ENCODE measurements at regions of chr9 and their contacts with region 1.

Region 1: GRCh38 chr9:131237931-131238401 is 38.3 kb downstream of the FAM78A start:
- DNase-seq: peak; percentile 67 to 90 (median 83)
- H3K4me3 ChIP-seq: peak overlapping the region; percentile 52
- H3K4me3 Mint-ChIP-seq: peak overlapping the region; percentile 11 to 93 (median 82)
- H3K27ac ChIP-seq: peak overlapping the region; percentile 38
- H3K27ac Mint-ChIP-seq: peak overlapping the region; percentile 91 to 99 (median 97)
- H3K4me1 ChIP-seq: peaks cover 53% of the 10 kb centered on the region
- H3K4me1 Mint-ChIP-seq: peaks cover 41 to 63% (median 50%) of the 10 kb centered on the region in 3 donors
- H3K27me3 ChIP-seq: no peaks in the 10 kb centered on the region
- H3K27me3 Mint-ChIP-seq: peaks cover 0 to 1% of the 10 kb centered on the region in 2 donors

Region 2: GRCh38 chr9:130997925-130998596 is 239.9 kb before region 1 on chr9:
- CTCF ChIA-PET with region 1: no interaction called
- POLR2A ChIA-PET with region 1: no interaction called
- DNase-seq: peak in 1 of 5 donors; percentile 12
- H3K4me3 ChIP-seq: no peak overlapping the region
- H3K4me3 Mint-ChIP-seq: peak overlapping the region in 1 of 7 donors; percentile 68
- H3K27ac ChIP-seq: no peak overlapping the region
- H3K27ac Mint-ChIP-seq: no peak overlapping the region
- H3K4me1 ChIP-seq: no peaks in the 10 kb centered on the region
- H3K4me1 Mint-ChIP-seq: peaks cover 0 to 4% (median 3%) of the 10 kb centered on the region in 3 donors
- H3K27me3 ChIP-seq: peaks cover 37% of the 10 kb centered on the region
- H3K27me3 Mint-ChIP-seq: peaks cover 15 to 37% of the 10 kb centered on the region in 2 donors

Region 3: GRCh38 chr9:131253891-131254491 is 16.0 kb after region 1 on chr9:
- CTCF ChIA-PET with region 1: interaction called, 7 read pairs
- POLR2A ChIA-PET with region 1: interaction called, 23 read pairs
- DNase-seq: peak in 1 of 5 donors; percentile 44
- H3K4me3 ChIP-seq: no peak overlapping the region
- H3K4me3 Mint-ChIP-seq: peak overlapping the region; percentile 33 to 86 (median 78)
- H3K27ac ChIP-seq: no peak overlapping the region
- H3K27ac Mint-ChIP-seq: peak overlapping the region; percentile 70 to 99 (median 90)
- H3K4me1 ChIP-seq: peaks cover 76% of the 10 kb centered on the region
- H3K4me1 Mint-ChIP-seq: peaks cover 55 to 72% (median 59%) of the 10 kb centered on the region in 3 donors
- H3K27me3 ChIP-seq: no peaks in the 10 kb centered on the region
- H3K27me3 Mint-ChIP-seq: peaks cover 0 to 2% of the 10 kb centered on the region in 2 donors

Region 4: GRCh38 chr9:131270171-131271015 is 32.4 kb after region 1 on chr9:
- CTCF ChIA-PET with region 1: interaction called, 4 read pairs
- POLR2A ChIA-PET with region 1: interaction called, 19 read pairs
- DNase-seq: peak in 4 of 5 donors; percentile 29 to 70 (median 57)
- H3K4me3 ChIP-seq: peak overlapping the region; percentile 70
- H3K4me3 Mint-ChIP-seq: peak overlapping the region; percentile 90 to 100 (median 96)
- H3K27ac ChIP-seq: peak overlapping the region; percentile 94
- H3K27ac Mint-ChIP-seq: peak overlapping the region; percentile 93 to 99 (median 97)
- H3K4me1 ChIP-seq: peaks cover 56% of the 10 kb centered on the region
- H3K4me1 Mint-ChIP-seq: peaks cover 55 to 73% (median 63%) of the 10 kb centered on the region in 3 donors
- H3K27me3 ChIP-seq: no peaks in the 10 kb centered on the region
- H3K27me3 Mint-ChIP-seq: peaks cover 0 to 3% of the 10 kb centered on the region in 2 donors

Region 5: GRCh38 chr9:131277910-131278701 is 40.1 kb after region 1 on chr9:
- CTCF ChIA-PET with region 1: interaction called, 4 read pairs
- POLR2A ChIA-PET with region 1: interaction called, 12 read pairs
- DNase-seq: peak; percentile 59 to 78 (median 63)
- H3K4me3 ChIP-seq: peak overlapping the region; percentile 52
- H3K4me3 Mint-ChIP-seq: peak overlapping the region; percentile 79 to 94 (median 88)
- H3K27ac ChIP-seq: peak overlapping the region; percentile 67
- H3K27ac Mint-ChIP-seq: peak overlapping the region; percentile 87 to 98 (median 95)
- H3K4me1 ChIP-seq: peaks cover 26% of the 10 kb centered on the region
- H3K4me1 Mint-ChIP-seq: peaks cover 25 to 36% (median 28%) of the 10 kb centered on the region in 3 donors
- H3K27me3 ChIP-seq: no peaks in the 10 kb centered on the region
- H3K27me3 Mint-ChIP-seq: peaks cover 0 to 2% of the 10 kb centered on the region in 2 donors

Region 6: DNA sequence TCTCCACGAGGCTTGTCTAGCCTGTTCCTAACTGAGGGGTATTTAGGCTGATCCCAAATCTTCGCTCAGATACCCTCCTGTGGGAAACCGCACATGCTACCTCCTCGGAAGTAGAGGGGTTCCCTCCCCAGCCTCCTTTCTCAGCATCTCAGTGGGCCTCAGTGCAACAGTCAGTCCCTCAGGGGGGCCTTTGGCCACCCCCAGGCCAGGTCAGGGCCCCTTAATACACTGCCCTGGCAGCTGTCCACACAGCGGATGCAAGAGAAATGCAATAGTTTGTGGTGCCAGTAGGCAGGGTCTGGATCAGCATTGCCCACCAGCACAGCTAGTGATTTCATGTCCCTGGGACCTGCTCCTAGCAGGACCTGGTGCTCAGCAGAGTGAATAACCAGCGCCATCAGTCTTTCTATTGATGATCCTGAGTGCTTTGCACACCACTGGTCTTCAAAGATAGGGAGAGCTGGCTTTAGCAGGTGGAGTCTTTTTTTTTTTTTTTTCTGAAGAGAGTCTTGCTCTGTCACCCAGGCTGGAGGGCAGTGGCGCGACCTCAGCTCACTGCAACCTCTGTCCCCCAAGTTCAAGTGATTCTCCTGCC is 59.0 kb after region 1 on chr9:
- CTCF ChIA-PET with region 1: no interaction called
- POLR2A ChIA-PET with region 1: no interaction called
- DNase-seq: no peak
- H3K4me3 ChIP-seq: no peak overlapping the region
- H3K4me3 Mint-ChIP-seq: no peak overlapping the region
- H3K27ac ChIP-seq: no peak overlapping the region
- H3K27ac Mint-ChIP-seq: no peak overlapping the region
- H3K4me1 ChIP-seq: no peaks in the 10 kb centered on the region
- H3K4me1 Mint-ChIP-seq: no peaks in the 10 kb centered on the region
- H3K27me3 ChIP-seq: no peaks in the 10 kb centered on the region
- H3K27me3 Mint-ChIP-seq: no peaks in the 10 kb centered on the region

Measured in CD8-positive, alpha-beta memory T cell (primary cell).